MCF 10A (cell line): ENCODE measurements at regions of chr1 and their contacts with region 1.

Region 1: GRCh38 chr1:45303582-45304310 is 22.9 kb upstream of the HPDL start:
- DNase-seq: peak; percentile 97
- H3K4me3 Mint-ChIP-seq: peak overlapping the region; percentile 86
- H3K27ac Mint-ChIP-seq: peak overlapping the region; percentile 96
- H3K4me1 Mint-ChIP-seq: peaks cover 5% of the 10 kb centered on the region
- H3K27me3 Mint-ChIP-seq: no peaks in the 10 kb centered on the region
- CTCF ChIP-seq: peak; percentile 67

Region 2: GRCh38 chr1:44792783-44793714 is 510.7 kb before region 1 on chr1:
- CTCF ChIA-PET with region 1: interaction called, 3 read pairs
- POLR2A ChIA-PET with region 1: no interaction called
- intact Hi-C with region 1: loop called (anchors 2 kb)
- DNase-seq: no peak
- H3K4me3 Mint-ChIP-seq: no peak overlapping the region
- H3K27ac Mint-ChIP-seq: peak overlapping the region; percentile 85
- H3K4me1 Mint-ChIP-seq: peaks cover 7% of the 10 kb centered on the region
- H3K27me3 Mint-ChIP-seq: no peaks in the 10 kb centered on the region
- CTCF ChIP-seq: no peak

Region 3: DNA sequence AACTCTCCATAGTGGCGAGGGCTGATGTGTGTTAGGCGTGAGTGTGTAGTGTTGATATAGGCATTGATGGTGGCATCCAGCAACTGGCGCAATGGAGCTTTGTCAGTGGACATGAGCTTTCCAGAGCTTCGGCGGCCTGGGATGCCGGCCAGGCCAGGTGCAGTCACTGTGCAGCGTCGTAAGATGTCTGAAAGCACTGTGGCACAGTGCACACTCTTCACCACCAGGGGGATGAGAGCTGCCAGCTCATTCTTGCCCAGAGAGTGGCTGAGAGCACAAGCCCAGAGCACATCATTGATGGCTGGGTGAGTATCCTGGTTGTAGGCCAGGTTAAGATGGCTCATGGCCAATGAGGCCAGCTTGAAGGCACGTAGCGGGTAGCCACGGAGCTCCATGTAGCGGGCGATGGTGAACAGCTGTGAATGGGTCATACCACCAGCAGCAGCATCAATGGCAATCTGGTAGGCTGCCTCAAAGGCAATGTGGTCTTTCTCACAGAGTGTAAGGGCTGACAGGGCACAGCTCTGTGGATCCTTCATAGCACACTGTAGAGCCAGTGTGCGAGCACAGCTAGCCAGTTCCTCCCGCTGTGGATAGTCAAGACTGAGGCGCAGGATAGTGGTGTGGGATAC is 285.0 kb before region 1 on chr1:
- CTCF ChIA-PET with region 1: interaction called, 437 read pairs
- POLR2A ChIA-PET with region 1: interaction called, 176 read pairs
- intact Hi-C with region 1: loop called (anchors 1 kb)
- DNase-seq: peak; percentile 81
- H3K4me3 Mint-ChIP-seq: no peak overlapping the region
- H3K27ac Mint-ChIP-seq: no peak overlapping the region
- H3K4me1 Mint-ChIP-seq: peaks cover 19% of the 10 kb centered on the region
- H3K27me3 Mint-ChIP-seq: no peaks in the 10 kb centered on the region
- CTCF ChIP-seq: peak; percentile 73

Region 4: GRCh38 chr1:45272983-45273382 is 30.8 kb before region 1 on chr1:
- CTCF ChIA-PET with region 1: interaction called, 10 read pairs
- POLR2A ChIA-PET with region 1: no interaction called
- intact Hi-C with region 1: no loop called
- DNase-seq: peak; percentile 75
- H3K4me3 Mint-ChIP-seq: no peak overlapping the region
- H3K27ac Mint-ChIP-seq: peak overlapping the region; percentile 68
- H3K4me1 Mint-ChIP-seq: peaks cover 5% of the 10 kb centered on the region
- H3K27me3 Mint-ChIP-seq: no peaks in the 10 kb centered on the region
- CTCF ChIP-seq: no peak

Region 5: GRCh38 chr1:45339789-45340570 is 36.2 kb after region 1 on chr1 and contains the starts of genes MUTYH and TOE1:
- CTCF ChIA-PET with region 1: interaction called, 7 read pairs
- POLR2A ChIA-PET with region 1: interaction called, 35 read pairs
- intact Hi-C with region 1: loop called (anchors 1 kb)
- DNase-seq: peak; percentile 89
- H3K4me3 Mint-ChIP-seq: peak within 1 kb of the TSS; percentile 93
- H3K27ac Mint-ChIP-seq: peak within 1 kb of the TSS; percentile 93
- H3K4me1 Mint-ChIP-seq: peaks cover 4% of the 10 kb centered on the region
- H3K27me3 Mint-ChIP-seq: no peaks in the 10 kb centered on the region
- CTCF ChIP-seq: no peak
- total RNA-seq, gene MUTYH: 31.2 and 31.3 TPM in 2 replicates
- total RNA-seq, gene TOE1: 11.1 and 13.3 TPM in 2 replicates

Region 6: DNA sequence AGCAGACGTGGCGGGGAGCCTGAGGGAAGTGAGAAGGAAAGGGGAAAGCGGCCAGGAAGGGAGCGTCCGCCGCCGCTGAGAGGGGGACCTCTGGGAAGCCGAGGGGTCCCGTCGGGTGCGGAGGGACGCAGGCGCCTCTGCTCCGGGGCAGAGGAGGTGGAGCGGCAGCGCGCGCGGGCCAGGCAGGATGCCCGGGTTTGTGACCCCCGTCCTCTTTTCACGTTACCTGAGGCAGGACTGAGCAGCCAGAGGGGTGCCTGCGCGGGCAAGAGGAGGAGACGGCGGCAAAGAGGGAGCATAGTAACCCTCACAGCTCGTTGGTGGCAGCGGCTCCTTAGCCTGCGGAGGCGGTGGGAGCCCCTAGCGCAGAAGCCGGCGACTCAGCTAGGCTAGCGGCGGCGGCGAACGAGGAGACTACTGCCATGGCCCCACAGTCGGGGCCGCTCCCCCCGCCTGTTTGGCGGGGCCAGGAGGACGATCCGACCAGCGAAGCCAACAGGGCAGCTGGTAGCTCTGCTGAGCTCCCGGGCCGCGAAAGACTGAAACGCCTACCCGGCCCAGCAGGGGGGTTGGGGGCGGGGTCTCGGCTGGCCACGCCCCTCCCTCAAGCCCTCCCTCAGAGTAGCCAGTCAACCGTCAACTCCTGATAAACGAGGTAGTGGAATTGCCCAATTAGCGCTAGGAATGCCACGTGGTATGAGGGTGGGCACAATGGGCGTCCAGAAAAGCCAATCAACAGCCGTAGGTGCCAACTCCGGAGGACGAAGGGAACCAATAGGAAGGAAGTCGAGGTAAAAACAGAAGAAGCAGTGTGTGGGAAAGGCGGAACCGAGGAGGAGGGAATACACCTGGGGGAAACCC is 187.1 kb after region 1 on chr1 and contains the start of gene TESK2:
- CTCF ChIA-PET with region 1: interaction called, 12 read pairs
- POLR2A ChIA-PET with region 1: interaction called, 22 read pairs
- intact Hi-C with region 1: loop called (anchors 2 kb)
- DNase-seq: peak; percentile 100
- H3K4me3 Mint-ChIP-seq: no peak within 1 kb of the TSS
- H3K27ac Mint-ChIP-seq: no peak within 1 kb of the TSS
- H3K4me1 Mint-ChIP-seq: peaks cover 5% of the 10 kb centered on the region
- H3K27me3 Mint-ChIP-seq: no peaks in the 10 kb centered on the region
- CTCF ChIP-seq: no peak
- total RNA-seq, gene TESK2: 0.71 and 1.4 TPM in 2 replicates